ENCODE measurements at regions of chr3 and their contacts with region 1.

Region 1: DNA sequence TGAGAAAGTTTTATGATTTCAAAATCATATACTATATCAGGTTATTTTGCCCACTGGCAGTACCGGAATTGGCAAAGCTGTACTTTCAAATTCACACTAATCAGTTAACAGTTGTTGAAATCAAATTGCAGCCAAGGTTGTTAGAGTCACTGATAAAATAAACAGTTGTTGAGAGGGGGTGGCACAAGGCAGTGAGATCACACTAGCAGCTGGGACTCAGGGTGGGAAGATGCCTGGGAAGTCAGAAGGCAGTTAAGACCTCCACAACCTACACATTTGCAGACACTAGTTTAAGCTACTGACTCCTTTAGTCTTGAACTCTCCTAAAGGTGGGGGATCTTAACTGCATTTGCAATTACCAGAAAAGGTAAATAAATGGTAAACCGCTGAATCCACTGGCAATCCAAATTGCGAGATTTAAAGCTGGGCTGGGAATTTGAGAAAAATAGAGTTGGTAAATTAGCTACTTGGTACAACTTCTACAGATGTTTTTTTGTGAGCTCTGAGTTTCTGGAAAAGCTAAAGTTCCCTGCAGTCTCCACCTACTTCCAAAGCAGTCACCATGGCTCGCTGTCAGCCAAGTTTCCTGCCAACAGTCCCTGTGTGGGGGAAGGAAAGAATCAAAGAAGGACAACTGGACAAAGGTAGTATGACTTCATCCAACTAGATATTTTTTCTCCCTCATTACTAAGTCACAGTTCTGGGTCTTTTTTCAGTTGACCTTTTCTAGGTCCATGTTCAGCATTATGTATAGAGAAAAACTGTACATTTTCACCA is 105.7 kb downstream of the ZNF385D start:
- DNase-seq: peak; percentile 85 to 86
- ATAC-seq: peak; percentile 84
- H3K4me3 ChIP-seq: peak overlapping the region; percentile 6 to 43
- H3K27ac ChIP-seq: peak overlapping the region; percentile 73 to 84
- H3K4me1 ChIP-seq: peaks cover 0 to 15% of the 10 kb centered on the region in 2 donors
- H3K27me3 ChIP-seq: no peaks in the 10 kb centered on the region

Region 2: DNA sequence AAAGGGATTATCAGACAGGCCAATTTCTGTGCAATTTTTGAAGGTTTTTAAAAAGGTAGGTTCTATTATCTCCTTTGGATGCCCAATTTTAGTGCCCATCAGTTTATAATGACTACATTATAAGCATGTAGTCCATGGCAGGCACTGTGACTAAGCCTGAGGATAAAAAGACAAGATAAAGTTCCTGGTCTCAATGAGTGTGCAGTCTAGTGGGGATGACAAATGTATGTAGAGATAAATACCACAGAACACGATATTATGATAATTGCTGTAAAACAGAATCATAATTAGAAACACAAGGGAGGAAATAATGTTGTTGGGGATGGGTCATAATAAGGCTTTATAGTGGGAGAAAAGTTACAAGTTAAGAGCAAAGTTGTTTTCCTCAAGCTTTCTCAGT is 57.4 kb before region 1 on chr3:
- intact Hi-C with region 1: loop called in 1 of 2 experiments (anchors 10 kb)
- DNase-seq: no peak
- ATAC-seq: no peak
- H3K4me3 ChIP-seq: no peak overlapping the region
- H3K27ac ChIP-seq: no peak overlapping the region
- H3K4me1 ChIP-seq: peaks cover 0 to 3% of the 10 kb centered on the region in 2 donors
- H3K27me3 ChIP-seq: no peaks in the 10 kb centered on the region

Region 3: DNA sequence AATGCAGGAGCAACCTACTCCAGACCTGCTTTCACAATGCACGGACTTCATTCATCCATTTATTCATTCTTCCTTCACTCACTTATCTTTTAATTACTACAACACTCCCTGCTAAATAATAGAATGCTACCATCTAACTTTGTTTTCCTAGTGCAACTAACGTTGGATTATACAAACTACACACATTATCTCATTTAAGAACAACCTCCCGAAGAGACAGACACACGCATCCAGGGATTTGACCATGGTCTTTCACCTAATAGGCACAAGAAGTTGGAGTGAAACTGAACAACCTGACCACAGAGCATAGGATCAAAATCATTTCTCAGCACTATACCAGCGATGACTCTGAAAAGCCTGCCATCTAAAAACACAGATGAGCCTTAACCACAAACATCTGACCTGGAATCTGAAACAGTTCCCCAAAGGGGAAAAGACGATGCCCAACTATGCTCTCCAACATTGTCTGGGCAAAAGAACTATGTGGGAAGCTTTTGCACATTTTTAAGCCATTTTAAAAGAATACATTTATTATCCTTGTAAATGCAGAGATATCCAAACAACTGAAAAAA is 84.7 kb after region 1 on chr3:
- intact Hi-C with region 1: no loop called
- DNase-seq: no peak
- ATAC-seq: no peak
- H3K4me3 ChIP-seq: no peak overlapping the region
- H3K27ac ChIP-seq: no peak overlapping the region
- H3K4me1 ChIP-seq: peaks cover 3 to 8% of the 10 kb centered on the region in 2 donors
- H3K27me3 ChIP-seq: no peaks in the 10 kb centered on the region

Region 4: GRCh38 chr3:21766002-21766401 is 120.7 kb after region 1 on chr3:
- intact Hi-C with region 1: no loop called
- DNase-seq: no peak
- ATAC-seq: no peak
- H3K4me3 ChIP-seq: no peak overlapping the region
- H3K27ac ChIP-seq: no peak overlapping the region
- H3K4me1 ChIP-seq: no peaks in the 10 kb centered on the region
- H3K27me3 ChIP-seq: no peaks in the 10 kb centered on the region

Measured in aorta (tissue), 5 donors.